ENCODE measurements at regions of chr7 and their contacts with region 1.

Region 1: GRCh38 chr7:41940760-41941343 is 238.0 kb upstream of the INHBA start:
- DNase-seq: peak; percentile 71
- ATAC-seq: peak; percentile 83
- H3K4me3 Mint-ChIP-seq: no peak overlapping the region
- H3K27ac Mint-ChIP-seq: no peak overlapping the region
- H3K4me1 Mint-ChIP-seq: peaks cover 18% of the 10 kb centered on the region
- H3K27me3 Mint-ChIP-seq: peaks cover 17% of the 10 kb centered on the region
- CTCF ChIP-seq: peak; percentile 84

Region 2: DNA sequence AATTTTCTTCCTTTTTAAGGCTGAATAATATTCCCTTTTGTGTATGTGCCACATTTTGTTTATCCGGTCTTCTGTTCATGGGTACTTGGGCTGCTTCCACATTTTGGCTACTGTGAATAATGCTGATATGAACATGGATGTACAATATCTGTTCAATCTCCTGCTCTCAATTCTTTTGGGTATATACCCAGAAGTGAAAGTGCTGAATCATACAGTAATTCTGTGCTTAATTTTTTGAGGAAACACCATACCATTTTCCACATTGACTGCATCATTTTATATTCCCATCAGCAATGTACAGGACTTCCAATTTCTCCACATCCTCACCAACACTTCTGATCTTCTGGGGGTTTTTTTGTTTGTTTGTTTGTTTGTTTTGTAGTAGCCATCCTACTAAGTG is 102.9 kb before region 1 on chr7:
- CTCF ChIA-PET with region 1: no interaction called
- POLR2A ChIA-PET with region 1: no interaction called
- DNase-seq: no peak
- ATAC-seq: no peak
- H3K4me3 Mint-ChIP-seq: no peak overlapping the region
- H3K27ac Mint-ChIP-seq: no peak overlapping the region
- H3K4me1 Mint-ChIP-seq: peaks cover 7% of the 10 kb centered on the region
- H3K27me3 Mint-ChIP-seq: peaks cover 3% of the 10 kb centered on the region
- CTCF ChIP-seq: no peak

Region 3: DNA sequence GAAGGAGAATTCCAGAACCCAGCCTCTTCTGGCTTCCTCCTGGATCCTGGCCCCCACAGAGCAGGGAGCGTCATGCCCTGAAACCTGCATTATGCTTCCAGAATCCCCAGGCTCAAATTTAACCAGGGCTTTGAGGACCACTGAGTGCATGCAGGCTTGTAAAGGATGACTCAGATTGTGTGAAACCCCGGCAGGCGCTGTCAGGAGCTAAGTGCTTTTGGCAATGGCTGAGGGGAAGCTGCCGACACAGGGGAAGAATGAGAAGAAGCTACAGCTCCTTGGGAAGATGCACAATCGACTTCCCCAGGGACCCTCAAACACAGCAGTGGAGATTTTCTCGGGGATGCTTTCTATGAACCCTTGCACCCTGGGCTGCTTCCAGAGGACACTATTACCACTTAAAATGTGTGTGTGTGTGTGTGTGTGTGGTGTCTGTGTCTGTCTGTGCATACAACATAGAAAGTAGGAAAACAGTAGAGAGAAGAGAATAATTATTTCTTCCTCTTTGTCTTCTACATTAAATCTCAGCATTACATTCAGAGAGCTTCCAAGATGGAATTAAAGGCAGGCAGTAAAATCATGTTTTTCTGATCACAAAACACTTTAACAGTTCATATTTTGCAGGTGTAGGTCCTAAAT is 54.5 kb before region 1 on chr7:
- CTCF ChIA-PET with region 1: interaction called, 14 read pairs
- POLR2A ChIA-PET with region 1: no interaction called
- DNase-seq: no peak
- ATAC-seq: no peak
- H3K4me3 Mint-ChIP-seq: no peak overlapping the region
- H3K27ac Mint-ChIP-seq: no peak overlapping the region
- H3K4me1 Mint-ChIP-seq: peaks cover 15% of the 10 kb centered on the region
- H3K27me3 Mint-ChIP-seq: no peaks in the 10 kb centered on the region
- CTCF ChIP-seq: no peak

Region 4: GRCh38 chr7:41977151-41977651 is 36.3 kb after region 1 on chr7:
- CTCF ChIA-PET with region 1: interaction called, 28 read pairs
- POLR2A ChIA-PET with region 1: no interaction called
- DNase-seq: no peak
- ATAC-seq: peak; percentile 62
- H3K4me3 Mint-ChIP-seq: no peak overlapping the region
- H3K27ac Mint-ChIP-seq: peak overlapping the region; percentile 75; the same call in 1 of the 2 replicates
- H3K4me1 Mint-ChIP-seq: peaks cover 14% of the 10 kb centered on the region
- H3K27me3 Mint-ChIP-seq: no peaks in the 10 kb centered on the region
- CTCF ChIP-seq: peak; percentile 58; the same call in 1 of the 2 replicates

Region 5: GRCh38 chr7:42152329-42153230 is 211.7 kb after region 1 on chr7:
- CTCF ChIA-PET with region 1: interaction called, 10 read pairs
- POLR2A ChIA-PET with region 1: no interaction called
- DNase-seq: no peak
- ATAC-seq: peak; percentile 31; the same call in 1 of the 2 replicates
- H3K4me3 Mint-ChIP-seq: no peak overlapping the region
- H3K27ac Mint-ChIP-seq: no peak overlapping the region
- H3K4me1 Mint-ChIP-seq: peaks cover 22% of the 10 kb centered on the region
- H3K27me3 Mint-ChIP-seq: no peaks in the 10 kb centered on the region
- CTCF ChIP-seq: no peak

Region 6: GRCh38 chr7:42574685-42575084 is 633.8 kb after region 1 on chr7:
- CTCF ChIA-PET with region 1: interaction called, 25 read pairs
- POLR2A ChIA-PET with region 1: no interaction called
- DNase-seq: no peak
- ATAC-seq: peak; percentile 53
- H3K4me3 Mint-ChIP-seq: no peak overlapping the region
- H3K27ac Mint-ChIP-seq: no peak overlapping the region
- H3K4me1 Mint-ChIP-seq: peaks cover 6% of the 10 kb centered on the region
- H3K27me3 Mint-ChIP-seq: no peaks in the 10 kb centered on the region; the same call in 1 of the 2 replicates
- CTCF ChIP-seq: no peak

Region 7: DNA sequence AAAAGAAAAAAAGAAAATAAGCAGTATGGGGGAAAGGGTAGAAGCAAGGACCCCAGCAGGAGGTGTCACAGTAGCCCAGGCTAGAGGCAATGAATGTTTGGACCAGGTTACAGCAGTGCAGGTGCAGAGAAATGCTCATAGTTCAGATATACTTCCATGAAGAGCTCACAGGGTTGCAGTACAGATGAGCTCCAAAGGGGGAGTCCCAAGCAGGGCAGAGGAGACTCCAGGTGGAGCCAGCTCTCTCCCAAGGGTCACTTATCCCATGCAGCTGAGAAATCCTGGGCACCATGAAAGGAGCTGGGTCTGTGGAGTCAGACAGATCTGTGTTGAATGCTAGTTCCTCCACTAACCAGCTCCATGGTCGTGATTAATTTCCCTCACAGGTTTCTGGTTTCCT is 796.1 kb after region 1 on chr7:
- CTCF ChIA-PET with region 1: interaction called, 11 read pairs
- POLR2A ChIA-PET with region 1: no interaction called
- DNase-seq: peak; percentile 42
- ATAC-seq: peak; percentile 100
- H3K4me3 Mint-ChIP-seq: no peak overlapping the region
- H3K27ac Mint-ChIP-seq: no peak overlapping the region
- H3K4me1 Mint-ChIP-seq: no peaks in the 10 kb centered on the region
- H3K27me3 Mint-ChIP-seq: peaks cover 3% of the 10 kb centered on the region; the same call in 1 of the 2 replicates
- CTCF ChIP-seq: 0 out of 2 replicates have a peak, but pooled peaks have one; percentile 14

Region 8: GRCh38 chr7:42843205-42843800 is 902.5 kb after region 1 on chr7:
- CTCF ChIA-PET with region 1: interaction called, 17 read pairs
- POLR2A ChIA-PET with region 1: no interaction called
- DNase-seq: peak; percentile 68
- ATAC-seq: peak; percentile 99
- H3K4me3 Mint-ChIP-seq: no peak overlapping the region
- H3K27ac Mint-ChIP-seq: no peak overlapping the region
- H3K4me1 Mint-ChIP-seq: peaks cover 23% of the 10 kb centered on the region
- H3K27me3 Mint-ChIP-seq: no peaks in the 10 kb centered on the region
- CTCF ChIP-seq: 0 out of 2 replicates have a peak, but pooled peaks have one; percentile 17